Heart right ventricle (tissue), 16 donors: ENCODE measurements at regions of chr18 and their contacts with region 1.

Region 1: GRCh38 chr18:59049721-59050660 is 89.7 kb upstream of the SEC11C start:
- DNase-seq: no peak
- ATAC-seq: peak in 1 of 8 donors; percentile 16
- H3K4me3 ChIP-seq: no peak overlapping the region
- H3K27ac ChIP-seq: no peak overlapping the region
- H3K4me1 ChIP-seq: peaks cover 0 to 17% (median 0%) of the 10 kb centered on the region in 9 donors
- H3K27me3 ChIP-seq: no peaks in the 10 kb centered on the region
- CTCF ChIP-seq: no peak

Region 2: DNA sequence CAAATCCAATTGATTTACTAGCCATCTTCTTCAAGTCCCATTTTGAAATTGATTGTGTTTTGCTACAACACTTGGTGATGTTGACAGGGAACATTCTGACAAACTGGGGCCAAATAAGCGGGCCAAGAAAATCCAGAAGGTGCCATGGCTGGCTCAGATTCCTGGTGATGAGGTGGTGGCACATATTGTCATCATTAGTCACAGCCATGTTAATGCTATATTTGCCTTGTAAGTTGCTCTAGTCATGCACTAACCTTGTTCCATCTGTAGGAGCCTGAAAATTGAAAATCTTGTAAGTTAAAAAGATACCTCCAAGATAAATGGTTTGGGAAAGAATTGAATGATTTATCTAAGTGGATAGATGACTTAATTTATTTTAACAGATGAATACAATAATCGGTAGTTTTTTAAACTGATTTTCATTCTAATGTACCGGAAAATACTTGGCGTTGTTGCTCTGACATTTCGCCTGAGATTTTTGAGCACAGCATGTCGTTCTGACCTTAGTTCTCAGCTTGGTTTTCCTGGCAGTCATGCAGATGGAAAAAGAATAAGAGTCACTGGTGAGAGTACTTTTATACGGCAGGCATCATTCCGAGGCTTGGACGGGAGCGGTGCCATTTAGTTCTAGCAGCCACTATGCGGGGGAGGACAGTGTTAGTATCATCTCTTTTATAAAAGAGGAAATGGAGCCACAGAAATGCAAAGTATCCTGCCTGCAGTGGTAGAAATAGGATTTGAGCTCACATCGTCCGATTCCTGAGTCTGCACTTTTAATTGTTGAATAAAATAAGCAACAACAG is 51.4 kb before region 1 on chr18:
- intact Hi-C with region 1: loop called in 5 of 10 experiments (anchors 5 kb)
- DNase-seq: peak; percentile 52 to 83
- ATAC-seq: peak; percentile 57 to 92 (median 80)
- H3K4me3 ChIP-seq: peak overlapping the region in 6 of 10 donors; percentile 3 to 34 (median 19)
- H3K27ac ChIP-seq: peak overlapping the region; percentile 70 to 94 (median 87)
- H3K4me1 ChIP-seq: peaks cover 6 to 68% (median 49%) of the 10 kb centered on the region in 9 donors
- H3K27me3 ChIP-seq: no peaks in the 10 kb centered on the region
- CTCF ChIP-seq: peak in 1 of 9 donors; percentile 4